ENCODE measurements at regions of chr22 and their contacts with region 1.

Region 1: GRCh38 chr22:36252754-36253517 is at the start of gene APOL1:
- DNase-seq: no peak
- ATAC-seq: peak; percentile 68 to 72
- H3K4me3 ChIP-seq: peak within 1 kb of the TSS; percentile 35 to 52 (median 43)
- H3K27ac ChIP-seq: peak within 1 kb of the TSS; percentile 67 to 77 (median 76)
- H3K4me1 ChIP-seq: peaks cover 5 to 9% of the 10 kb centered on the region in 2 donors
- H3K27me3 ChIP-seq: no peaks in the 10 kb centered on the region
- CTCF ChIP-seq: no peak
- POLR2A ChIP-seq: peak; percentile 31 to 60
- total RNA-seq, gene APOL1: 0.87 to 11.1 (median 6.2) TPM

Region 2: DNA sequence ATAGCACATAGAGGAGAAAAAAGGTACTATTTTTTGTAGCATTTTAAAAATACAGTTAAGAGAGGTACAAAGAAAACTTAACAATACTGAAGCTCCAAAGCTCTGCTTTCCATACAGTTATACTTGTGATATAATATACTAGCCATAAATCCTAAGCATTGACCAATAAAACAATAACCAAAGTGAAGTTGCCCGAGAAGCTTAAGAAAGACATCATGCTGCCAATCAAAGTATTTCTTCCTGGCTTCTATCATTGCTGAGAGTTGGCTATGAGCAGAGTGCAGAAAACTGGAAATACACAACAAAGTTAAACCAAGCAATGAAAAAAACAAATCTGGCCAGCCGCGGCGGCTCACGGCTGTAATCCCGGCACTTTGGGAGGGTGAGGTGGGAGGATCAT is 308.5 kb before region 1 on chr22:
- in situ Hi-C with region 1: no loop called
- intact Hi-C with region 1: loop called (anchors 5 kb)
- DNase-seq: no peak
- ATAC-seq: no peak
- H3K4me3 ChIP-seq: peak overlapping the region in 1 of 4 donors; percentile 11
- H3K27ac ChIP-seq: no peak overlapping the region
- H3K4me1 ChIP-seq: peaks cover 4 to 10% of the 10 kb centered on the region in 2 donors
- H3K27me3 ChIP-seq: no peaks in the 10 kb centered on the region
- CTCF ChIP-seq: no peak
- POLR2A ChIP-seq: no peak

Region 3: DNA sequence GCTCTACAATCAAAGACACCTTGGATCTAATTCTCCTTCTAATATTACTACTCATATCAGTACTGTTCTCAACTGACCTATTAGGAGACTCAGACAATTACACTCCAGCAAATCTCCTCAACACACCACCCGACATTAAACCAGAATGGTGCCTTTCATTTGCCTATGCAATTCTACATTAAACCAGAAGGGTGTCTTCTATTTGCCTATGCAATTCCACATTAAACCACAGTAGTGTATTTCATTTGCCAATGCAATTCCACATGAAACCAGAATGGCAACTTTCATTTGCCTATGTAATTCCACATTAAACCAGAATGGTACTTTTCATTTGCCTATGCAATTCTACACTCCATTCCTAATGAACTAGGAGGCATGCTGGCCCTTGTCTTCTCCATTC is 77.0 kb before region 1 on chr22:
- in situ Hi-C with region 1: no loop called
- intact Hi-C with region 1: no loop called
- DNase-seq: no peak
- ATAC-seq: no peak
- H3K4me3 ChIP-seq: no peak overlapping the region
- H3K27ac ChIP-seq: no peak overlapping the region
- H3K4me1 ChIP-seq: no peaks in the 10 kb centered on the region
- H3K27me3 ChIP-seq: no peaks in the 10 kb centered on the region
- CTCF ChIP-seq: no peak
- POLR2A ChIP-seq: no peak

Region 4: DNA sequence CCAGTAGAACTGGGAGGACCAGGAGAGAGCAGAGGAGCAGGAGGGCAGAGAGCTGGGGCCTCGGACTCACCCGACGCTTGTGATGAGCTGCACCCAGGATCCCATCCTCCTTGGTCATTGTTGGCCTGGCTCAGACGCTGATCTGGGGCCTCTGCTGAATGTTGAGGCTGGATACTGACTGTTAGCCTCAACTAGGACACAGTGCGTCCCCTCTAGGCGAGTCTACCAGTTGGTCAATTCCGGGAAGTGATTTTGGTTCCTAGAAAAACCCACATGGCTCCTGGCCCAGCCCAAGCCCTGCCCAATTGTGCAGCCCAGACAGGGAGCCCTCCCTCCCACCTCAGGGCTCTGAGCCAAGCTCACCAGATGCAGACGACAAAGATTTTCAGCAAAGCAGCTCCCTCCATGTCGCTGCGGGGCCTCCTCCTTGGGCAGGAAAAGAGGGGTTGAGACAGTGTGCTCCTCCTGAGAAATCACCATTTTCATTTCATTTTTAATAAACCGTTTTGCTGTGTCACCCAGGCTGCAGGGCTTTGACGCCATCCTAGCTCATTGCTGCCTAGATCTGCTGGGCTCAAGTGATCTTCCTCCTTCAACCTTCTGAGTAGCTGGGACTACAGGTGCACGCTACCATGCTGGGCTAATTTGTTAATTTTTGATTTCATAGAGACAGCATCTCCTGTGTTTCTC is 51.2 kb before region 1 on chr22 and contains the start of gene APOL4:
- in situ Hi-C with region 1: no loop called
- intact Hi-C with region 1: loop called (anchors 2 kb)
- DNase-seq: peak; percentile 42 to 66
- ATAC-seq: peak; percentile 75
- H3K4me3 ChIP-seq: peak within 1 kb of the TSS in 1 of 4 donors; percentile 28
- H3K27ac ChIP-seq: peak within 1 kb of the TSS in 3 of 4 donors; percentile 34 to 63 (median 55)
- H3K4me1 ChIP-seq: peaks cover 0 to 16% of the 10 kb centered on the region in 2 donors
- H3K27me3 ChIP-seq: no peaks in the 10 kb centered on the region
- CTCF ChIP-seq: no peak
- POLR2A ChIP-seq: peak in 1 of 2 donors; percentile 28
- total RNA-seq, gene APOL4: 1.5 to 2.3 (median 2.0) TPM in 3 of 4 donors, not detected in the other

Region 5: DNA sequence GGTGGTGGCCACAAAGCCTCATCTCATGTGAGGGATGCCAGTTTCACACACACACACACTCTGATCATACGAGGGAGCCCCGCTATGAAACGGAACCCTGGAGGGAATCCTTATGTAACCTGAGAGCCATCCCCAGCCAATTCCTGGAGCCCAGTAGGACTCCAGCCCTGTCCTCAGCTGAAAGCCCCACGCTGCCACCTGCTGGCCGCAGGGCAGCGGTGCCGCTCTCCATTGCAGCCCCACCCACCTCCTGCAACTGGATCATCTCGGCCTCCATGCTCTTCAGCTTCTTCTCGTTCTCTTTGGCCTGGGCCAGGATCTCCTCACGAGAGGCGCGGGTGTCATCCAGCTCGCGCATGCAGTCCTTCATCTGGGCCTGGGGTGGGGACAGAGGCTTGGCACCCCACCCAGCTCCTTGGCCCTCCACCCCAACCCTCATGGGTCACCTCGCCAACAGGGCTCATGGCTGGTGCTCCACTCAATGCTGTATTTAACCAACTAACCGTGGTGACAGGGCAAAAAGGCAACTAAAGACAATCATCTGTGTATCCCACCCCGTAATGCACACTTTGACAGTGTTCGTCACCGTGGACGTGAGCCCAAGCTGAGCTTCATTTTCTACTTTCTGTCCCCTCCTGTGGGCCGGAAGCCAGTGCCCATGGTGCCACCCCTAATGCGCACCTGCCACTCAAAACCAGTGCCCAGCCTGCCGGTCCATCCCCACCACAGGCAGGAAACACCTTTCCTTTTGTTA is 33.7 kb after region 1 on chr22:
- in situ Hi-C with region 1: no loop called
- intact Hi-C with region 1: no loop called
- DNase-seq: peak; percentile 47 to 82
- ATAC-seq: peak; percentile 85 to 95
- H3K4me3 ChIP-seq: no peak overlapping the region
- H3K27ac ChIP-seq: peak overlapping the region; percentile 4 to 61 (median 46)
- H3K4me1 ChIP-seq: peaks cover 10 to 11% of the 10 kb centered on the region in 2 donors
- H3K27me3 ChIP-seq: no peaks in the 10 kb centered on the region
- CTCF ChIP-seq: peak; percentile 88 to 97 (median 92)
- POLR2A ChIP-seq: no peak